PC-9 (cell line): ENCODE measurements at regions of chr5 and their contacts with region 1.

Region 1: GRCh38 chr5:134851307-134851923 is 5.6 kb downstream of the C5orf24 start:
- DNase-seq: peak in 1 of 2 experiments; percentile 42
- H3K4me3 ChIP-seq: no peak overlapping the region
- H3K27ac ChIP-seq: 0 out of 2 replicates have a peak overlapping the region, but pooled peaks have one; percentile 23
- H3K4me1 ChIP-seq: peaks cover 16% of the 10 kb centered on the region
- H3K27me3 ChIP-seq: no peaks in the 10 kb centered on the region
- CTCF ChIP-seq: peak; percentile 70

Region 2: GRCh38 chr5:134380346-134380745 is 471.1 kb before region 1 on chr5:
- CTCF ChIA-PET with region 1: no interaction called
- POLR2A ChIA-PET with region 1: no interaction called
- intact Hi-C with region 1: no loop called
- DNase-seq: no peak
- H3K4me3 ChIP-seq: no peak overlapping the region
- H3K27ac ChIP-seq: no peak overlapping the region
- H3K4me1 ChIP-seq: no peaks in the 10 kb centered on the region
- H3K27me3 ChIP-seq: no peaks in the 10 kb centered on the region
- CTCF ChIP-seq: no peak

Region 3: GRCh38 chr5:134503088-134503946 is 348.1 kb before region 1 on chr5:
- CTCF ChIA-PET with region 1: no interaction called
- POLR2A ChIA-PET with region 1: no interaction called
- intact Hi-C with region 1: no loop called
- DNase-seq: peak; percentile 85 to 91
- H3K4me3 ChIP-seq: no peak overlapping the region
- H3K27ac ChIP-seq: peak overlapping the region; percentile 86
- H3K4me1 ChIP-seq: peaks cover 69% of the 10 kb centered on the region
- H3K27me3 ChIP-seq: no peaks in the 10 kb centered on the region
- CTCF ChIP-seq: no peak

Region 4: GRCh38 chr5:134813407-134813806 is 38.0 kb before region 1 on chr5:
- CTCF ChIA-PET with region 1: no interaction called
- POLR2A ChIA-PET with region 1: no interaction called
- intact Hi-C with region 1: no loop called
- DNase-seq: no peak
- H3K4me3 ChIP-seq: no peak overlapping the region
- H3K27ac ChIP-seq: no peak overlapping the region
- H3K4me1 ChIP-seq: no peaks in the 10 kb centered on the region
- H3K27me3 ChIP-seq: no peaks in the 10 kb centered on the region
- CTCF ChIP-seq: no peak

Region 5: GRCh38 chr5:135208903-135209721 is 357.7 kb after region 1 on chr5:
- CTCF ChIA-PET with region 1: no interaction called
- POLR2A ChIA-PET with region 1: no interaction called
- intact Hi-C with region 1: loop called (anchors 10 kb)
- DNase-seq: peak; percentile 59 to 77
- H3K4me3 ChIP-seq: no peak overlapping the region
- H3K27ac ChIP-seq: 0 out of 2 replicates have a peak overlapping the region, but pooled peaks have one; percentile 14
- H3K4me1 ChIP-seq: peaks cover 20% of the 10 kb centered on the region
- H3K27me3 ChIP-seq: no peaks in the 10 kb centered on the region
- CTCF ChIP-seq: no peak